PC-3 (cell line): ENCODE measurements at regions of chr2 and their contacts with region 1.

Region 1: GRCh38 chr2:204325468-204325867 is 219.8 kb upstream of the PARD3B start:
- DNase-seq: peak; percentile 87
- ATAC-seq: peak; percentile 74
- H3K4me3 ChIP-seq: no peak overlapping the region
- H3K27ac ChIP-seq: no peak overlapping the region
- H3K4me1 ChIP-seq: peaks cover 22% of the 10 kb centered on the region
- H3K27me3 ChIP-seq: no peaks in the 10 kb centered on the region
- CTCF ChIP-seq: peak; percentile 92

Region 2: GRCh38 chr2:204145263-204145751 is 180.2 kb before region 1 on chr2:
- CTCF ChIA-PET with region 1: interaction called, 4 read pairs
- POLR2A ChIA-PET with region 1: no interaction called
- intact Hi-C with region 1: loop called (anchors 5 kb)
- DNase-seq: peak; percentile 87
- ATAC-seq: peak; percentile 99
- H3K4me3 ChIP-seq: peak overlapping the region; percentile 68
- H3K27ac ChIP-seq: no peak overlapping the region
- H3K4me1 ChIP-seq: no peaks in the 10 kb centered on the region
- H3K27me3 ChIP-seq: peaks cover 64% of the 10 kb centered on the region
- CTCF ChIP-seq: peak; percentile 98

Region 3: GRCh38 chr2:204538182-204539018 is 212.9 kb after region 1 on chr2:
- CTCF ChIA-PET with region 1: no interaction called
- POLR2A ChIA-PET with region 1: interaction called, 5 read pairs
- intact Hi-C with region 1: loop called (anchors 5 kb)
- DNase-seq: peak; percentile 19
- ATAC-seq: no peak
- H3K4me3 ChIP-seq: no peak overlapping the region
- H3K27ac ChIP-seq: no peak overlapping the region
- H3K4me1 ChIP-seq: peaks cover 22% of the 10 kb centered on the region
- H3K27me3 ChIP-seq: no peaks in the 10 kb centered on the region
- CTCF ChIP-seq: no peak

Region 4: DNA sequence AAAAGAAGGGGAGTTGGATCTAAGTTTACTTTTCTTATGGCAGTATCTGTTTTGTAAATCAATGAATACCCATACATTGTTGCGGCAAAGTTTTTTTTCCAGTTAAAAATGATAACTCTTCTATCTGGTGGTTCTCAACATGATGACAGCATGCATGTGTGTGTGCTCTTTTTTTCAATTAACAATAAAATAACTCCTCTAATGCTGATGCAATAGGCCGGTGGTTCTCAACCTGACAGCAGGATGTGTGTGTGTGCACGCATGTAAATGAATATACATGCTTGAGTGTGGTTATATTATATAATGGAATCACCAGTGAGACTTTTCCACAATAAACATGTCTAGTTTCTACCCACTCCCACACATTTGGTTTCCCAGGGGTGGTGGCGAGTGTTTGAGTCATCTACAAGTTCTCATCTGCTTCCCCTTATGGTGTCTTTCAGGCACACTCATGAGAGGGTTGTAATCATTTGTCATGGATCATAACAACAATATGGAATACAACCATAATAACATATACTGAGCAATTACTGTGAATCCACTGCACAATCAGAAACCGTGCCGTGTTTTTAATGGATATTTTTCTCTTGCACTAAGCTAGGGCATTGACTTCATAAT is 251.0 kb after region 1 on chr2:
- CTCF ChIA-PET with region 1: no interaction called
- POLR2A ChIA-PET with region 1: no interaction called
- intact Hi-C with region 1: no loop called
- DNase-seq: no peak
- ATAC-seq: no peak
- H3K4me3 ChIP-seq: no peak overlapping the region
- H3K27ac ChIP-seq: no peak overlapping the region
- H3K4me1 ChIP-seq: no peaks in the 10 kb centered on the region
- H3K27me3 ChIP-seq: no peaks in the 10 kb centered on the region
- CTCF ChIP-seq: no peak

Region 5: GRCh38 chr2:204625167-204625566 is 299.7 kb after region 1 on chr2:
- CTCF ChIA-PET with region 1: no interaction called
- POLR2A ChIA-PET with region 1: no interaction called
- intact Hi-C with region 1: loop called (anchors 1 kb)
- DNase-seq: peak; percentile 65
- ATAC-seq: peak; percentile 97
- H3K4me3 ChIP-seq: no peak overlapping the region
- H3K27ac ChIP-seq: no peak overlapping the region
- H3K4me1 ChIP-seq: peaks cover 5% of the 10 kb centered on the region; the same call in 1 of the 2 replicates
- H3K27me3 ChIP-seq: no peaks in the 10 kb centered on the region
- CTCF ChIP-seq: peak; percentile 68

Region 6: GRCh38 chr2:204842661-204843485 is 517.4 kb after region 1 on chr2:
- CTCF ChIA-PET with region 1: no interaction called
- POLR2A ChIA-PET with region 1: no interaction called
- intact Hi-C with region 1: loop called (anchors 5 kb)
- DNase-seq: peak; percentile 84
- ATAC-seq: peak; percentile 93
- H3K4me3 ChIP-seq: peak overlapping the region; percentile 25; the same call in 1 of the 2 replicates
- H3K27ac ChIP-seq: peak overlapping the region; percentile 57
- H3K4me1 ChIP-seq: peaks cover 28% of the 10 kb centered on the region
- H3K27me3 ChIP-seq: no peaks in the 10 kb centered on the region
- CTCF ChIP-seq: no peak